ENCODE measurements at regions of chr14 and their contacts with region 1.

Region 1: DNA sequence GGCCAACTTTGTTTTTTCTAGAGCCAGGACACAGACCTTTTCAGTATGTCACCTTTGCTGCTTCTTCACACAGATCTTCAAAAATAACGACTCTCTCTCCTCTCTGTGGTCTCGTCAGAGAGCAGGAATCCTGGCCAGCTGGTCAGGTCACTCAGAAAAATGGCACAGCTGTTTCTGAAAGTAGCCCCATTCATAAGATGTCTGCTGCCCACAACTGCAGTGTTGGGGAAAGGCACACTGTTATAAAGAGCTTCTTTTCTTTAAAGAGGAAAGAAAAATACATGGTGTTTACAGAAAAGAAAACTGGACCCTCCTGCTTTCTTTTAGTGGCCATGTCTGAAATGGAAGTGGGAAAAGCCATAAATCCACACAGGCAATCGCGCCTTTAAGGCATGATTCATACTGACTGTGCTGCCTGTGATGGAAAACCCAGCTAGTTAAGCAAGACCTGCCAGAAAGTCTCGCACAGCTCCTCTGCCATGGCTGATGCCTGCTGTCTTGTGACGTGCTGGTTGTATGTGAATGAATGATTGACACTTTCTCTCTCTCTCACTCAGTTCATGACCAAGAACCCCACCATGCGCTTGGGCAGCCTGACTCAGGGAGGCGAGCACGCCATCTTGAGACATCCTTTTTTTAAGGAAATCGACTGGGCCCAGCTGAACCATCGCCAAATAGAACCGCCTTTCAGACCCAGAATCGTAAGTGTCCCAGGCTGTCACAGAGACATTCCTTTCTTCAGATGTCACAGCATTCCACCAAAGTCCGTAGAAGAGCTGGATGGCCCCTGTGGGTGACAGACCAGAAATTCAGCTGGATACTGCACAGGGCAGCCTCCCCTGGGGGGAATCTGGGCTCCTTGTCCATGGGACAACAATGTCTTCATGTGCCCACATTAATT is 147.9 kb upstream of the HIF1A start:
- DNase-seq: no peak
- H3K4me3 ChIP-seq: no peak overlapping the region
- H3K27me3 ChIP-seq: no peaks in the 10 kb centered on the region
- CTCF ChIP-seq: no peak

Region 2: DNA sequence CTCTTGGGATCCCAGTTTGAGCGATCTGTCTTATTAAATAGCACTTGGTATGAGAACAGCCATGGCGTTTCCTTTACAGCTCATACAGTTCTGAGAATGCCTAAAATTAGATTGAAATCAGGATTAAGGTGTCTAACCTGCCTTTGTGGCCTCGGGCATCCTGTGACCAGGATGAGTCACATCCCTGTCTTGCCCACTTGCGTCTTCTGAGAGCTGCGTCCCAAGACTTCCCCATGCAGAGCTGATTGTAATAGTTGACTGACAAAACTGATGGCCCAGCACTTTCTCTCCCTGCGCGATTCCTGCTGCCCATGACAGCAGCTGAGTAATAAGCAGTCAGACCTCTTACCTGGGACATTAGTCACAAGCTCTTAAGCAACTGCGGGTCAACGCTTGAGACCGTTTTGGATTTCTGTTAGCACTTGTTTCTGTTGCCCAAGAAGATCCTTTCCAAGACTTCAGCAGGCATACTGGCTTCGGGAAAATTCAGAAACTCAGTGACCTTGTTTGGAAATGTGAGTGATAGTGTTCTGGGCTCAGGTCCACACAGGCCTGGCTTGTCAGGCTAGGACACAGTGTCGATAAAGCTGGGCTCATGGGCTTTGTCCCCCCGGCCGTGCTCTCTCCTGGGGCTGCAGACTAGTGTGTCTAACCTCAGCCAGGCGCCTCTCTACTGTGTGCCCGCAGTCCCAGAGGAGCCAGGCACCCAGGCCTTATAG is 22.0 kb before region 1 on chr14:
- CTCF ChIA-PET with region 1: interaction called, 5 read pairs
- POLR2A ChIA-PET with region 1: interaction called, 10 read pairs
- DNase-seq: no peak
- H3K4me3 ChIP-seq: no peak overlapping the region
- H3K27me3 ChIP-seq: no peaks in the 10 kb centered on the region
- CTCF ChIP-seq: no peak

Region 3: GRCh38 chr14:61644834-61645233 is 97.4 kb after region 1 on chr14:
- CTCF ChIA-PET with region 1: no interaction called
- POLR2A ChIA-PET with region 1: no interaction called
- DNase-seq: no peak
- H3K4me3 ChIP-seq: no peak overlapping the region
- H3K27me3 ChIP-seq: no peaks in the 10 kb centered on the region
- CTCF ChIP-seq: no peak